ENCODE measurements at regions of chr22 and their contacts with region 1.

Region 1: DNA sequence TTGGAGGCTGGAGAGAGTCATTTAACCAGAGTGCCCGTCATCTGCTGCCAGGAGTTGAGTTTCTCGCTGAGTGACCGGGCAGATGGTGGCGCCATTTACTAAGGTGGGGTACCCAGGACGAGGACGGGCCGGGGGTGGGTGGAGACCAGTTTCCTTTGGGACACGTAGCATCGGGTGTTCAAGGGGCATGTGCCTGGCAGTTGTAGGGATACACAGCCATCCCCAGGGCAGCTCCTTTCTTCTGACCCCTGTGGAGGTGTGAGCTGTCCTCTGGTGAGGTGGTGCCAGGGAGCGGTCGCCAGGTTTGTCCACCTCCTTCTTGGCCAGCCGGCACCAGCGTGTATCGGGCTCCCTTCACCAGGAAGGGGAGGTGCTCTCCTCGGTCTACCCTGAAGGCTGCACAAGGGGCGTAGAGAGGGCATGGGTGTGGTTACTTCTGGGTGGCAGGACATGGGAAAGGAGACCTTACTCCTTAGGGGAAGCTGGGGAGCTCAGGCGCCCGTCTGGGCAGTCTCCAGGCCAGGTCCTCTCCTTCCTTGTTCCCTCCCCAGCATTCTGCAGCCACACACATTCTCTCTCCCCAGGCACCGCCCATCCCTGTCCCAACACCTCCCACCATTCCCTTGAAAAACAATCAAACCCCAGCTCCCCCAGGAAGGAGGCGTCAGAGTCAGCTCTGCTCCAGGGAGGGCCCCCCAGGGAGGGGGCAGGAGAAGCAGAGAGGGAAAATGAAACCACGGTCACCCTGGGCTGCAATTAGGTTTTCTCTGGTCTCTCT is 10.3 kb upstream of the MB start:
- DNase-seq: peak; percentile 94 to 98
- H3K4me3 ChIP-seq: peak overlapping the region; percentile 49; the same call in 1 of the 2 replicates
- H3K27ac ChIP-seq: peak overlapping the region; percentile 98
- H3K4me1 ChIP-seq: peaks cover 51% of the 10 kb centered on the region
- H3K27me3 ChIP-seq: no peaks in the 10 kb centered on the region
- CTCF ChIP-seq: peak; percentile 67

Region 2: GRCh38 chr22:34534101-34534500 is 1093.4 kb before region 1 on chr22:
- CTCF ChIA-PET with region 1: no interaction called
- POLR2A ChIA-PET with region 1: no interaction called
- intact Hi-C with region 1: no loop called
- DNase-seq: no peak
- H3K4me3 ChIP-seq: no peak overlapping the region
- H3K27ac ChIP-seq: no peak overlapping the region
- H3K4me1 ChIP-seq: no peaks in the 10 kb centered on the region
- H3K27me3 ChIP-seq: 0 out of 2 replicates have a peak, but pooled peaks cover 12% of the 10 kb centered on the region
- CTCF ChIP-seq: no peak

Region 3: GRCh38 chr22:35589071-35589952 is 38.1 kb before region 1 on chr22:
- CTCF ChIA-PET with region 1: interaction called, 7 read pairs
- POLR2A ChIA-PET with region 1: interaction called, 10 read pairs
- intact Hi-C with region 1: loop called (anchors 1 kb)
- DNase-seq: peak; percentile 96 to 100
- H3K4me3 ChIP-seq: peak overlapping the region; percentile 62; the same call in 1 of the 2 replicates
- H3K27ac ChIP-seq: peak overlapping the region; percentile 98
- H3K4me1 ChIP-seq: peaks cover 90% of the 10 kb centered on the region
- H3K27me3 ChIP-seq: no peaks in the 10 kb centered on the region
- CTCF ChIP-seq: no peak

Region 4: GRCh38 chr22:35742342-35743100 is 115.1 kb after region 1 on chr22:
- CTCF ChIA-PET with region 1: interaction called, 3 read pairs
- POLR2A ChIA-PET with region 1: interaction called, 7 read pairs
- intact Hi-C with region 1: loop called (anchors 1 kb)
- DNase-seq: peak; percentile 27 to 76
- H3K4me3 ChIP-seq: no peak overlapping the region
- H3K27ac ChIP-seq: peak overlapping the region; percentile 56
- H3K4me1 ChIP-seq: peaks cover 20% of the 10 kb centered on the region
- H3K27me3 ChIP-seq: no peaks in the 10 kb centered on the region
- CTCF ChIP-seq: no peak

Region 5: DNA sequence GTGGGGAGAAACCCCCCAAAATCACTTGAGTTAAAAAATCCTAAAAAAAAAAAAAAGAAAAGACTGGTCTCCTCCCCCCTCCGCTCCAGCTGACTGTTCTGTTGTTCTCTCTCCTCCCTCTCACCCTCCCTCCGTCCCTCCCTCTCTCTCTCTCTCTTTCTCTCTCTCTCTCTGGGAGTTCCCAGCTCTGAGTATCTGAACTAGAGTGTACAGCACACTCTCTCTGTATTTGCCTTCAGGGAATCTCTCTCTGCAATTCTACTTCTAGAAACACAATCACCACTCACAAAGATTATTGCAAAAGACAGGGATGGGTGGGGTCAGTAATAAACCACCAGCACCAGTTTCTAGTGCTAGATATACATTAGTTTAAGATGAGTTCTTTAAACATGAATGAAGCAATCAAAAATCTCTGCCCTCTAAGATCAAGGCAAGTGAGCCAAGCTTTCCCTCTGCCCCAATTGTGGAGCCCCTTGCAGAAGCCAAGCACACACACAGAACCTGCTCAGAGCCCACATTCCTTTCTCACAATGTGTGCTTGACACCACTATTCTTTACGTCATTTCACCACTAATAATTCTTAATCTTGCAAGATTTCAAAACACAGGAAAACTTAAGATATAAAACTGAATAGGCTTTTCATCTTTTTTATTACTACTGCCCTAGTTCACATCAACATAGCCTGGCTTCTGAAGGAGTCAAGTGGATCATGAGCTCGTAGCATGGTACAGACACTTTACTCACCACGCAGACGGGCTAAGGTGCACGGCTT is 267.7 kb after region 1 on chr22:
- CTCF ChIA-PET with region 1: no interaction called
- POLR2A ChIA-PET with region 1: interaction called, 3 read pairs
- intact Hi-C with region 1: loop called (anchors 1 kb)
- DNase-seq: peak; percentile 49 to 100
- H3K4me3 ChIP-seq: peak overlapping the region; percentile 33; the same call in 1 of the 2 replicates
- H3K27ac ChIP-seq: peak overlapping the region; percentile 94
- H3K4me1 ChIP-seq: peaks cover 52% of the 10 kb centered on the region
- H3K27me3 ChIP-seq: no peaks in the 10 kb centered on the region
- CTCF ChIP-seq: peak; percentile 54

Region 6: DNA sequence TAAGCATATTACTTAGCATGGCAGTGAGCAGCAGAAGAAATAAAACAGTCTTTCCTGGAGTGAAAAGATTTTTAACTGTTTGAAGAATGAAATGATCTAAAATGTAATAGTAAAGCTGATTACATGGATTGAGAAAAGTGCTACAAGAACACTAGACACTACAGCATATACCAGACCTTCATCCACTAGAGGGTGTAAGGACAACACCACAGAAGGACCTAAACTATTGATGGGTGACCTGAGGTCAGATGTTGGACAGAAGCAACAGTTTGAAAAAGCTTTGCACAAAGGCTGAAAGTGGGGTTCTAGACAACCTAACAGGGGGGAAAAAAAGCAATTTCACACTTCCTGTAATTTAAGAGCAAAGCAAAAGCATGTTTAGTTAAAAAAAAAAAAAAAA is 303.5 kb after region 1 on chr22:
- CTCF ChIA-PET with region 1: no interaction called
- POLR2A ChIA-PET with region 1: interaction called, 18 read pairs
- intact Hi-C with region 1: no loop called
- DNase-seq: peak; percentile 3 to 48
- H3K4me3 ChIP-seq: no peak overlapping the region
- H3K27ac ChIP-seq: no peak overlapping the region
- H3K4me1 ChIP-seq: no peaks in the 10 kb centered on the region
- H3K27me3 ChIP-seq: no peaks in the 10 kb centered on the region
- CTCF ChIP-seq: peak; percentile 73

Region 7: DNA sequence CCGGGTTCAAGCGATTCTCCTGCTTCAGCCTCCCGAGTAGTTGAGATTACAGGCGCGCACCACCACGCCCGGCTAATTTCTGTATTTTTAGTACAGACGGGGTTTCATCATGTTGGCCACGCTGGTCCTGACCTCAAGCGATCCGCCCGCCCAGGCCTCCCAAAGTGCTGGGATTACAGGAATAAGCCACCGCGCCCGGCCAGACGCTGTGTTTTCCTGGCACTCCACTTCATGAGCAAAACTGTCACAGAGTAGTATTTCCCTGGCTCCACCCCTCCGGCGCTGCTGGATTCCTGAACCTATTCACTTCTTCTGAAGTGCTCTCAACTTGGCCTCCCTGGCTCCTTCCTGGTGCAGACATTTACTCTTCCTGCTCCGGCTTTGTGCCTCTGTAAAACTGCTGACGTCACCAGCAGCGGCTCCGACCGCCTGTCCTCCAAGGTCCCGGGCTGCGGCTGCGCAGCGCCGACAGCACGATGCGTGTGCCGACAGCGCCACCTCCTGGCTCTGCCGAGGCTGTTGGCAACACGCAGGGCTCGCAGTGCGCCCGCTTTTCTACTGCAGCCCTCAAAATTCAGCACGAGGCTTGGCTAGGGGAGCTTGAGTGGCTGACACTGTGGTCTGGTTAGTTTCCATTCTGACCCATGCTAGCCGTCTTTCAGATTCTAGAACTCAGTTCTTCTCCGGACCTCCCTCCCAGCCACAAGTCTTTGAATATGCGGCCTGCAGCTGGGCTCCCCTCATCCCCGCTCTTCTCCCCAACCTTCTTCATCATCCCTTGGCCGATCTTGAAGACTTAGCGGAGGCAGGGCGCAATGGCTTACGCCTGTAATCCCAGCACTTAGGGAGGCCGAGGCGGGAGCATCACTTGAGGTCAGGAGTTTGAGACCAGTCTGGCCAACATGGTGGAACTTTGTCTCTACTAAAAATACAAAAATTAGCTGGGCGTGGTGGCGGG is 496.5 kb after region 1 on chr22:
- CTCF ChIA-PET with region 1: no interaction called
- POLR2A ChIA-PET with region 1: interaction called, 3 read pairs
- intact Hi-C with region 1: loop called (anchors 1 kb)
- DNase-seq: peak; percentile 94 to 97
- H3K4me3 ChIP-seq: peak overlapping the region; percentile 50
- H3K27ac ChIP-seq: peak overlapping the region; percentile 76
- H3K4me1 ChIP-seq: peaks cover 8% of the 10 kb centered on the region
- H3K27me3 ChIP-seq: 0 out of 2 replicates have a peak, but pooled peaks cover 3% of the 10 kb centered on the region
- CTCF ChIP-seq: peak; percentile 99

Measured in PC-9 (cell line).